ENCODE measurements at regions of chr3 and their contacts with region 1.

Region 1: GRCh38 chr3:67349551-67350174 is 304.7 kb downstream of the SUCLG2 start:
- DNase-seq: peak; percentile 69
- H3K4me3 Mint-ChIP-seq: no peak overlapping the region
- H3K27ac Mint-ChIP-seq: no peak overlapping the region
- H3K4me1 Mint-ChIP-seq: peaks cover 12% of the 10 kb centered on the region
- H3K27me3 Mint-ChIP-seq: peaks cover 5% of the 10 kb centered on the region

Region 2: DNA sequence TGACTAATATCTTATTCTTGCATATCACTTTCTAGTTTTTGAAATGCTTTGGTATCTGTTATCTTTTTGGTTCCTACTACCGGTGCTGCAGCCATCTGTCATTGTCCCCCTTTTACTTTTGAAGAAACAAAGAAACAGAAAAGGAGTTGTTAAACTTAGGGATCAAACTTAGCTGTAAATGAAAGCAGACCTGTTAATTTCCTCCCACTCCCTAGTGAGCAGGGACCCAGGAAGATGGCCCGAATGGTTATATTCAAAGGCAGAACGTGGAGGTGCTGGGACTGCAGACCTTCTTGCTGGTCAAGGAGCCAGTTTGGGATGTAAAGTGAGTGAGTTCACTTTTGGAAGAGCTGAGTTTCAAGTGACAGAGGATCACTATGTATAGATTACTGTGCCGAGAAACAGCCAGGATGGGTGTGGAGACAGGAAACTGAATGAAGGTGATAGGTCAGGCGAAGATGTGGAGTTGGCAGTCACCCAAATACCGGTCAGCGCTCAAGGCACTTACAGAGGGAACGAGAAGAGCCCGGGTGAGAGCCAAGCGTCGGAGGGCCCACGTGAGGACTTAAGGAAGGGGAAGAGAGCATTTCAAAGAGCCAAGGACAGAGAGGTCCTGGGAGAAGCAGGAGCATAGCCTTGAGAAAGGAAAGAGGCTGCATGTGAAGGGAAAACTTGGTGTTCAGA is 331.4 kb before region 1 on chr3:
- CTCF ChIA-PET with region 1: no interaction called
- POLR2A ChIA-PET with region 1: no interaction called
- intact Hi-C with region 1: loop called (anchors 5 kb)
- DNase-seq: peak; percentile 15
- H3K4me3 Mint-ChIP-seq: peak overlapping the region; percentile 7
- H3K27ac Mint-ChIP-seq: no peak overlapping the region
- H3K4me1 Mint-ChIP-seq: peaks cover 28% of the 10 kb centered on the region
- H3K27me3 Mint-ChIP-seq: no peaks in the 10 kb centered on the region

Region 3: GRCh38 chr3:67329358-67329757 is 20.3 kb before region 1 on chr3:
- CTCF ChIA-PET with region 1: interaction called, 3 read pairs
- POLR2A ChIA-PET with region 1: no interaction called
- intact Hi-C with region 1: loop called (anchors 1 kb)
- DNase-seq: peak; percentile 51
- H3K4me3 Mint-ChIP-seq: no peak overlapping the region
- H3K27ac Mint-ChIP-seq: no peak overlapping the region
- H3K4me1 Mint-ChIP-seq: peaks cover 11% of the 10 kb centered on the region
- H3K27me3 Mint-ChIP-seq: peaks cover 8% of the 10 kb centered on the region

Region 4: GRCh38 chr3:67334588-67334987 is 15.1 kb before region 1 on chr3:
- CTCF ChIA-PET with region 1: no interaction called
- POLR2A ChIA-PET with region 1: no interaction called
- intact Hi-C with region 1: loop called (anchors 1 kb)
- DNase-seq: no peak
- H3K4me3 Mint-ChIP-seq: no peak overlapping the region
- H3K27ac Mint-ChIP-seq: no peak overlapping the region
- H3K4me1 Mint-ChIP-seq: peaks cover 4% of the 10 kb centered on the region
- H3K27me3 Mint-ChIP-seq: peaks cover 8% of the 10 kb centered on the region

Region 5: GRCh38 chr3:67635257-67635656 is 285.6 kb after region 1 on chr3:
- CTCF ChIA-PET with region 1: no interaction called
- POLR2A ChIA-PET with region 1: no interaction called
- intact Hi-C with region 1: loop called (anchors 1 kb)
- DNase-seq: peak; percentile 29
- H3K4me3 Mint-ChIP-seq: no peak overlapping the region
- H3K27ac Mint-ChIP-seq: peak overlapping the region; percentile 67
- H3K4me1 Mint-ChIP-seq: peaks cover 66% of the 10 kb centered on the region
- H3K27me3 Mint-ChIP-seq: no peaks in the 10 kb centered on the region

Region 6: GRCh38 chr3:68648494-68648893 is 1298.8 kb after region 1 on chr3:
- CTCF ChIA-PET with region 1: no interaction called
- POLR2A ChIA-PET with region 1: no interaction called
- intact Hi-C with region 1: no loop called
- DNase-seq: no peak
- H3K4me3 Mint-ChIP-seq: no peak overlapping the region
- H3K27ac Mint-ChIP-seq: no peak overlapping the region
- H3K4me1 Mint-ChIP-seq: no peaks in the 10 kb centered on the region
- H3K27me3 Mint-ChIP-seq: no peaks in the 10 kb centered on the region